ENCODE measurements at regions of chr1 and their contacts with region 1.

Region 1: DNA sequence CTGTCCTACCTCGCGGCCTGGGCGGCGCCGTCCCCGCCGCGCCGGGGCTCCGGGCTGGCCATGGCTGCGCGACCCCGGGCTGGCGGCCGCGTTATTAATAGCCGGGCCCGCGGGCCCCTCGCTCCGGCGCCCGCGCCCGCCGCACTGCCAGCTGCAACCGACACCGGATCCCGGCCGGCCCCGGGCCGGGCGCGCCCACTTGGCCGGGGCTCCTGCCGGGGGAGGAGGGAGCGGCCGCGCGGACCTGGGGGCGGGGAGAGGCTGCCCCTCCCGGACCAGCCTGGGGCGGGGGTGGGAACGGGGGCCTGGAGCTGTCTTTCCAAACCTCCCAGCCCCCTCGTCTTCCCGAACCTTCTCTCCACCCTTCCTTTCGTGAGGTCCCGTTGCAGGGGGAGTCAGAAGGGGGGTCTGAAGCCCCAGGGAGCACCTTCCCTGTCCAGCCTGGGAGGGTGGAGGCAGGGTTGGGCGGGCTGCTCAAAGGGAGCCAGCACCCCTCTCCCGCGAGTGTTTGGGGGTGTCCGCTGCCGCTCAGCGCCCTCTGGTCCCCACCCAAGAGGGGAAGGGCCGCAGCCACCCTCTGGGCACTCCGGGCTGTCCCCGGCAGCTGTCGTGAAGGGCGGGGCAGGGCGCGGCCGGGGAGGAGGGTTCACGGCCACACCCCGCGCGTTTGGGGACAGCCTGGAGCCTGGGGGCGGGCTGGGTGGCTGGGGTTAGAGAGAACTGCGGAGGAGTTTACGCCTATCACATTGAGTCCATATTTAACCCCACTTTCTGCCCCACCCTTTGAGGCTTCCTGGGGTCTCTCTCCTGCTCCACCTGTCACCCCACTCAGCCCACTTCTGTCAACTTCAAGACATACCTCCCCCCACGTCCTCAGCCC is at the start of gene SYNC:
- DNase-seq: peak; percentile 31
- H3K4me3 ChIP-seq: peak within 1 kb of the TSS; percentile 76
- H3K27me3 ChIP-seq: no peaks in the 10 kb centered on the region
- CTCF ChIP-seq: no peak
- polyA plus RNA-seq, gene SYNC: 57.3 and 60.5 TPM in 2 replicates

Region 2: GRCh38 chr1:32592943-32593342 is 109.9 kb before region 1 on chr1:
- CTCF ChIA-PET with region 1: no interaction called
- POLR2A ChIA-PET with region 1: interaction called, 11 read pairs
- DNase-seq: no peak
- H3K4me3 ChIP-seq: no peak overlapping the region
- H3K27me3 ChIP-seq: no peaks in the 10 kb centered on the region
- CTCF ChIP-seq: no peak

Region 3: GRCh38 chr1:32684167-32684811 is 18.6 kb before region 1 on chr1:
- CTCF ChIA-PET with region 1: no interaction called
- POLR2A ChIA-PET with region 1: interaction called, 14 read pairs
- DNase-seq: peak; percentile 27
- H3K4me3 ChIP-seq: no peak overlapping the region
- H3K27me3 ChIP-seq: no peaks in the 10 kb centered on the region
- CTCF ChIP-seq: no peak

Region 4: GRCh38 chr1:32716312-32717148 is 13.7 kb after region 1 on chr1:
- CTCF ChIA-PET with region 1: interaction called, 23 read pairs
- POLR2A ChIA-PET with region 1: interaction called, 3 read pairs
- DNase-seq: no peak
- H3K4me3 ChIP-seq: no peak overlapping the region
- H3K27me3 ChIP-seq: no peaks in the 10 kb centered on the region
- CTCF ChIP-seq: no peak

Region 5: DNA sequence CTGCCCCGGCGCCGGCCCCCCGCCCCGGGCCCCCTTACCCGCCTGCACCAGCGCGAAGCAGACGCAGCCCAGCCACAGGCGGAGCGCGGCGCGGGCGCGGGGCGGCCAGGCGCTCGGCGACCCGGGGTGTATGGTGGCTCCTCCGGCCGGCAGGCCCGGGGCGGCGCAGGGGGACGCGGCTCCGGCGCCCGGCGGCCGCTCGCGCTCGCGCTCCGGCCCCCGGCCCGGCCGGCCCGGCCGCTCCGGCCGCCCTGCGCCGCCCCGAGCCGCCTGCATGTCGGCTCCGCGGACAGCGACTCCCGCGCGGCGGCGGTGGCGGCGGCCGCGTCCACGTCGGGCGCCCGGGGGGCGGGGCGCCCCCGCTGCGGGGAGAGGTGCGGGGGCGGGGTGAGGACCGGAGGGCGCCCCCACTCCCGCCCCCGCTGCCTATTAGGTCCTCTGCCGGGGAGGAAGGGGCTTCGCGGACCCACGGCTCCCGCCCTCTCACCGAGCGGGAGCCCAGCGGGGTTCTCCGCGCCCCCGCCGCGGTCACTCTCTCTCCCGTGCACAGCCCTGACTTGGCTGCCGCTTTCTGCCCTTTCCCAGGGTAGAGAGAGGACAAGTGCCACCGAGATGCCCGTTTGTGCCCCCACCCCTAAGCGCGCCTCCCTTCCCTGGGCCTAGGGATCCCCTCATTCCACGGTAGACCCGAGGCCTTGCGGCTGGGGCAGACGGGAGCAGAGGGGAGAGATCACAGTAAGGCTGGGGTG is 167.9 kb after region 1 on chr1 and contains the start of gene FNDC5:
- CTCF ChIA-PET with region 1: interaction called, 16 read pairs
- POLR2A ChIA-PET with region 1: no interaction called
- DNase-seq: no peak
- H3K4me3 ChIP-seq: peak within 1 kb of the TSS; percentile 40
- H3K27me3 ChIP-seq: peaks cover 7% of the 10 kb centered on the region
- CTCF ChIP-seq: 0 out of 2 replicates have a peak, but pooled peaks have one; percentile 1
- polyA plus RNA-seq, gene FNDC5: 1.1 and 1.2 TPM in 2 replicates